GM10248 (cell line): ENCODE measurements at regions of chr9 and their contacts with region 1.

Region 1: DNA sequence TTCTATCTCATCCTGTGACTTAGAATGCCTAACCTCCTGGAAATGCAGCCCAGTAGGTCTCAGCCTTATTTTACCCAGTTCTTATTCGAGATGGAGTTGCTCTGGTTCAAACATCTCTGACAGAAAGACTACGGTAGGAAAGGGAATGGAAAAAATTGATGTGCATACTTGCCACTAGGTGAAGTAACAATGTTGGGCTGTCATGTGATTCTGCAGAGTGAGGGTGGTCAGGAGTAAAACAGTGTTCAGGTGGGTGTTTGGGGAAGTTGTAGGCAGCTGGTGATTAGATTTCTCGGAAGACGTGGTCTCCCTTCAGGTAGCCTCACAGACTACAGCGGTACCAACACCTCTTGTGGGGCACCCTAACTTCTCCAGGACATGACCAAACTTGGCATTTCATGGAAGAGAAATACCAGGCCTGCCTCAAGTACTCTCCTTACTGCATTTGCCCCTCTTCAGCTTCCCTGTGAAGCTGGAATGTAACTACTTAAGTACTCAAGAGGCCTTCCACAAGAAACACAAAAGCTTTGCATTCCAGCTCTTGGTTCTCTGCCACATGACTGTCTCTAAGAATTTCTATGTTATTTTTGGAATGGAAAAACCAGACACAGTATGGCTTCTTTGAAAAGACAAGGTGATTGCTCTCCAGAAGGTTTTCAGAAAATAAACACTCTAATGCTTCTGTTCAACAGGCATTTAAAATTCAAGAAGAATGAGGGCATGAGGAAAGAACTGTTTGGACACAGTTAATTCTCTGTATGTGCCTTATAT is 17.4 kb upstream of the ENTREP1 start:
- DNase-seq: no peak
- CTCF ChIP-seq: no peak

Region 2: DNA sequence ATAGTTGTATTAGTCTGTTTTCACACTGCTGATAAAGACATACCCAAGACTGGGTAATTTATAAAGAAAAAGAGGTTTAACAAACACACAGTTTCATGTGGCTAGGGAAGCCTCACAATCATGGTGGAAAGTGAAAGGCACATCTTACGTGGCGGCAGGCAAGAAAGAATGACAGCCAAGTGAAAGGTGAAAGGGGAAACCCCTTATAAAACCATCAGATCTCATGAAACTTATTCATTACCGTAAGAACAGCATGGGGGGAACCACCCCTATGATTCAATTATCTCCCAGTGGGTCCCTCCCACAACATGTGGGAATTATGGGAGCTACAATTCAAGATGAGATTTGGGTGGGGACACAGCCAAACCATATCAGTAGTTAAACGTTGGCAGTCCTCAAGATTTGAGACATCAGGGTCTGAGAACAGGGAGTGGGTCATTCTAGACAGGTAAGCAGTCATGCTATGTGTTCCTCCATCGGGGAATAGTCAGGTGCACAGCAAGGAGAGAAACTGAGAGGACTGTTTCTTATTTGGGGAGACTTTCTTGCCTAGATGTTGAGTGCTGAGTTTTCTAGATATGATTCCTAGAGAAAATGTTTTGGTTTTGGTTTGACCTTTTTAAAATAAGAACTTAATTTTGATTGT is 28.4 kb before region 1 on chr9:
- CTCF ChIA-PET with region 1: no interaction called
- POLR2A ChIA-PET with region 1: no interaction called
- DNase-seq: no peak
- CTCF ChIP-seq: no peak

Region 3: GRCh38 chr9:69326287-69326686 is 18.7 kb after region 1 on chr9:
- CTCF ChIA-PET with region 1: no interaction called
- POLR2A ChIA-PET with region 1: no interaction called
- DNase-seq: no peak
- CTCF ChIP-seq: no peak

Region 4: DNA sequence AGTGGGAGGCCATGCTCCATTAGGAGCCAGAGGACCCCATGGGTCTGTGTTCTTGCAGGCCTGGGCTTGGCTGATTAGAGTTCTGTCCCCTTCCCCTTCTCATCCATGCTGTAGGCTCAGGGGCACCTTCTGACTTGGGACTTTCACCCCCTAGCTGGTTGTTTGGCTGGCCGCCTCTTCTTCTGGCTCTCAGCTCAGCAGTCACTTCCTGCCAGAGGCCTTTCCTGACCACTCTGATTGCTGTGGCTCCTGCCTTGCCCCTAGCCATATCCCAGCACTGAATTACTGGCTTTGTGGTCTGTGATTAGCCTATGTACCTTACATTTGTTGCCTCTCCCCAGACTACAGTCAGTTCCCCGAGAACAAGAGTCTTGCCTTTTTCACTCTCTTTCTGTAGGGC is 32.0 kb after region 1 on chr9:
- CTCF ChIA-PET with region 1: no interaction called
- POLR2A ChIA-PET with region 1: interaction called, 10 read pairs
- DNase-seq: no peak
- CTCF ChIP-seq: no peak

Region 5: DNA sequence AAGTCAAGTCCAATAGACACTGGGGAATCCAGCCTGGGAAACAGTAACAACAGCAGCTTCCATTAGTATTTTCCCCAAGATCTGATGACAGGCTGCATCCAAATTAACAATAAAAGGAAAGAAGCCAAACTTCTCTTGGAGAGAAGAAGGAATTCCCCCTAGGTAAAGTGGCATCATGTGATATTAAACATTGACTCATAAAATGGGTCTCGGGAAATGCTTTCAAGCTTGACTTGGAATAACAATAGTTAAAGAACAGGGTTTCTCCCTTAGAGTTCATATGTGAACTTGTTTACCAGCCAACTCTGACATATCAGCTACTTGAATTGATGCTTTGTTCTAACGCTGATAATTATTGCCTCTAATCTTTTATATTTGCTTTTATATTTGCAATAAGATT is 62.8 kb after region 1 on chr9:
- CTCF ChIA-PET with region 1: no interaction called
- POLR2A ChIA-PET with region 1: no interaction called
- DNase-seq: no peak
- CTCF ChIP-seq: no peak